Activated naive CD4-positive, alpha-beta T cell treated with anti-CD3 and anti-CD28 coated beads for 36 hours (primary cell): ENCODE measurements at regions of chr1 and their contacts with region 1.

Region 1: GRCh38 chr1:147389532-147390524 is 147.3 kb downstream of the CHD1L start:
- DNase-seq: peak; percentile 4
- H3K4me3 Mint-ChIP-seq: no peak overlapping the region
- H3K27ac Mint-ChIP-seq: no peak overlapping the region
- H3K4me1 Mint-ChIP-seq: peaks cover 2% of the 10 kb centered on the region
- H3K27me3 Mint-ChIP-seq: peaks cover 8% of the 10 kb centered on the region

Region 2: GRCh38 chr1:147273409-147274336 is 116.2 kb before region 1 on chr1:
- CTCF ChIA-PET with region 1: interaction called, 39 read pairs
- intact Hi-C with region 1: loop called (anchors 1 kb)
- DNase-seq: peak; percentile 42
- H3K4me3 Mint-ChIP-seq: no peak overlapping the region
- H3K27ac Mint-ChIP-seq: no peak overlapping the region
- H3K4me1 Mint-ChIP-seq: peaks cover 6% of the 10 kb centered on the region
- H3K27me3 Mint-ChIP-seq: no peaks in the 10 kb centered on the region

Region 3: DNA sequence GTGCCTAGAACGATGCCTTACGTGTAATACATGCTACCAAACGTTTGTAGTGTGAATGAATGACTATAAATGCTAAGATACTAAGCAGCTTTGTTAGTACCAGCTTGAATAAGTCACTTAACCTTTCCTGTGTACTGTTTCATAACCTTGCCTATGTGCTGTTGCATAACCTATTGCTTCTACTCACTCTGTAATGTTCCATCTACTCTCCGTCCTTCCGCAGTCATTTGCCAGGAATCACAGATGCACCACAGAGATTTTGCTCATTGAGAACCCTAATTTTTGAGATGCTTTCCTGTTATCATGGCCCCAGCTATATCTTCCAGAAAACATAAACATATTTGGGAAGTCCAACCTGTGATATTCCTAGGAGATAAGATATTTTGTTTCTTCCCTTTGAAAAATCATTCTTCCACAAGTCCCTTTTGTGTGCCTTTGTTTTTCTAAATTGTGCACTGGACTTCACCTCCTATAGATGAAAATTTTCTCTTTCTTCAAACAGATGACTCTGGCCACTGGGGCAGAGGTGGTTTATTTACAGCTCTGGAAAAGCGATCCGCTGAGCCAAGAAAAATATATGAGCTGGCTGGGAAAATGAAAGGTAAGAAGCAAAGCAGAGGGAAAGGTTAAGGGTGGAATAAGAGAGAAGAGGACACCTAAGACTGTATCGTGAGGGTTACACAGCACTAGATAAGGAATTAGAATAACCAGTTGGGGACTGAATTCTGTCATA is 102.5 kb before region 1 on chr1:
- CTCF ChIA-PET with region 1: interaction called, 5 read pairs
- intact Hi-C with region 1: loop called (anchors 5 kb)
- DNase-seq: no peak
- H3K4me3 Mint-ChIP-seq: no peak overlapping the region
- H3K27ac Mint-ChIP-seq: no peak overlapping the region
- H3K4me1 Mint-ChIP-seq: peaks cover 8% of the 10 kb centered on the region
- H3K27me3 Mint-ChIP-seq: no peaks in the 10 kb centered on the region